ENCODE measurements at regions of chr21 and their contacts with region 1.

Region 1: DNA sequence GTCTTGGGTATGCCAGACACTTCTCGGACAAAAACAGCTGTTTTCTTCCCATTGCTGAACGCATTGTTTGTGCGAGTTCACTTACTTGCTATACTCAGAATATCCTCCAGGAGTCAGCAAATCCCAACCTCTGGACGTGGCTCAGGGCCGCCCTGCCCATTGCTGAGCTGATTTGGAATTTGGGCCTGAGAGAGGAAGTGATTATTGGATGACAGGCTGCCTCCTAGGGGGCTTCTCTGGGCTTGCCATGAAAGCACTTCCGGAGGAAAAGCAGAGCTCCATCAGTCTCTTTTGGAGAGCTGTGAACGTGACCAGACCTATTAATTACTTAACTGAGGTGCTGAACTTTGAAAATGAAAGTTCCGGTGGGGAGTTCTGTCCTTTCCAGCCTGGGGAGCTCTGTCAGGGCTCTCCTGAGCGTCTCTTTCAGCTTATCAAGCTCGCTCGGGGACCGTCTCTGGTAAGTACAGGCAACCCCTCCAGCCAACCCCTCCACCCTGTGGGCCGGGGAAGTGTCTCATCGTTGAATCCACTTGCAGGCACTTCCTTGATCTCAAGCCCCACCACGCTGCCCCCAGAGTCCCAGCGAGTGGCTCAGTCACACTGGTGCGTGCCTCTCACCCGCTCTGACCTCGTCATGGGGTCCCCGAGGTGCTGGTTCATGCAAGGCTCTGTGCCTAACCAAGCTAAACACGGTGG is 76.9 kb downstream of the CLIC6 start:
- DNase-seq: peak; percentile 90
- ATAC-seq: peak; percentile 97
- H3K4me3 ChIP-seq: peak overlapping the region; percentile 49 to 72 (median 58)
- H3K27ac ChIP-seq: peak overlapping the region; percentile 43
- H3K4me1 ChIP-seq: peaks cover 44% of the 10 kb centered on the region
- H3K27me3 ChIP-seq: 0 out of 5 replicates have a peak, but pooled peaks cover 0 to 8% of the 10 kb centered on the region in 2 experiments
- CTCF ChIP-seq: peak; percentile 93
- EP300 ChIP-seq: no peak
- POLR2A ChIP-seq: no peak
- RAD21 ChIP-seq: peak; percentile 96

Region 2: GRCh38 chr21:34771512-34772028 is 25.9 kb after region 1 on chr21:
- CTCF ChIA-PET with region 1: no interaction called
- POLR2A ChIA-PET with region 1: interaction called, 5 read pairs
- in situ Hi-C with region 1: no loop called
- intact Hi-C with region 1: loop called (anchors 1 kb)
- DNase-seq: peak; percentile 89
- ATAC-seq: peak; percentile 99
- H3K4me3 ChIP-seq: peak overlapping the region in 2 of 3 experiments; percentile 17 to 50; a peak in 2 of 6 replicates
- H3K27ac ChIP-seq: peak overlapping the region; percentile 81
- H3K4me1 ChIP-seq: peaks cover 44% of the 10 kb centered on the region
- H3K27me3 ChIP-seq: no peaks in the 10 kb centered on the region
- CTCF ChIP-seq: no peak
- EP300 ChIP-seq: peak in 1 of 2 experiments; percentile 75; a peak in 2 of 4 replicates
- POLR2A ChIP-seq: peak in 1 of 2 experiments; percentile 52; a peak in 2 of 4 replicates
- RAD21 ChIP-seq: no peak

Region 3: DNA sequence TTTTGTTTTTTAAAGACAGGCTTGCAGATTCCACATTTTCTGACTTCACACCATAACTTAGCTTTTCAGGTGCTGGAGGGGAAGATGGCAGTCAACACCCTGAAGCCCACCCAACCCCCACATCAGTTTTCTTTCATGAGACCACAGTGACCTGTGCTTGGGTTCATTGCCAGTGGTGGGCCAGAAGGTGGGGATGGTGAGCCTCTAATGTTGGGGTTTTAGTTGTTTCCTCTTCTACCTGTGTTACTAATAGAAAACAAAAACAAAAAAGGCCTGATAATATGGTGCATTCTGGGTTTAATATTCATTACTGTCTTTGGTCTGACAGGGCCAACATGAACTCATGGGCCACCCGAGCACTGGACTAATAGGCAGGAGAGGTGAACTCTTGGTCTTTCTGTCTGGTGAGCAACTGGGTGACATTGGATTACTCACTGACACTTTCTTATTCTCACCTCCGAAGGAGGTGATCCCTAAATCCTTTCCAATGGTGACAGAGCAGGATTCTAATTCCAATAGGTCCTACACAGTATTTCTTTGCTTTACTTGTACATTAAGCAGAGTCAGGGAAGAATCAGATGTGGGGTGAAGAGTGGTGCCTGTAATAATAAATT is 55.9 kb after region 1 on chr21:
- CTCF ChIA-PET with region 1: no interaction called
- POLR2A ChIA-PET with region 1: interaction called, 29 read pairs
- in situ Hi-C with region 1: no loop called
- intact Hi-C with region 1: loop called (anchors 5 kb)
- DNase-seq: no peak
- ATAC-seq: peak; percentile 71
- H3K4me3 ChIP-seq: no peak overlapping the region
- H3K27ac ChIP-seq: peak overlapping the region; percentile 41
- H3K4me1 ChIP-seq: peaks cover 58% of the 10 kb centered on the region
- H3K27me3 ChIP-seq: no peaks in the 10 kb centered on the region
- CTCF ChIP-seq: peak; percentile 71
- EP300 ChIP-seq: no peak
- POLR2A ChIP-seq: no peak
- RAD21 ChIP-seq: no peak; the same call in 1 of the 2 replicates

Region 4: DNA sequence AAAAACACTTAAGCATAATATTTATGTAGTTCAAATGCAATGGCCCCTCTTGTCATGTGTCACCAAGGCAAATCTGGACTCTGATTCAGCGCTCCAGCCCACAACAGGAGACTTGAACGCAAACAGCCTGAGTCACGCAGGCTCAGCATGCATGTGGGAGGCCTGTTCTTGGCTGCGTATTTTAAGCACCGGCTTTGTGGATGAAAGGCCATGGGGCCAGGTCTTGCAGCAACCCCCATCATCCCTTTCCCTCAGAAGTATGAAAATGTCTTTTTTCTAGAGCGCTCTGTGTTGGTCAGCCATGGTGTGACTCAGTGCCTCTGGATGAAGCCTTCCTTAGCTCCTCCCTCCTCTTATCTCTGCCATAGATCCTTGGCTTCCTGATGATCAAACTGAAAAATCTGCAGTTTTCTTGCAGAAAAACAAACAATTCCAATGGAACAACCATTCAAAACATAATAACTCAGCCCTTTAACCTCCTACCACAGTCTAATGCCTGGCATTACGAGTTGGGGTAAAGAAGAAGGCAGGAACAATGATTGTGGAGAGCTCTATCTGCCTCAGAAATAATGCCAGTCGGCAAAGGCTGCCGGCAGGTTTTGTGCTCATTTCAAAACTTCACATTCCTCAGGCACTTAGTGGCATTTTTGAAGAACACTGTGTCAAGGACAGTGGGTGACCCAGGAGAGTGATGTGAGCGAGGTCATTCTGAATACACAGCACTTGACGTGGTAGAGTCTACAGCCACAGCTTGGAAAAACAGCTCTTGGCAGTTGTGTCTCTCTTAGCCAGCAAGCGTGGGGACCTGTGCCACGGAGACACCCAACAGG is 90.6 kb after region 1 on chr21:
- CTCF ChIA-PET with region 1: no interaction called
- POLR2A ChIA-PET with region 1: interaction called, 16 read pairs
- in situ Hi-C with region 1: no loop called
- intact Hi-C with region 1: loop called (anchors 5 kb)
- DNase-seq: peak; percentile 92
- ATAC-seq: peak; percentile 92
- H3K4me3 ChIP-seq: peak overlapping the region; percentile 19 to 45 (median 21)
- H3K27ac ChIP-seq: peak overlapping the region; percentile 92
- H3K4me1 ChIP-seq: peaks cover 54% of the 10 kb centered on the region
- H3K27me3 ChIP-seq: no peaks in the 10 kb centered on the region
- CTCF ChIP-seq: no peak
- EP300 ChIP-seq: peak; percentile 48 to 87; a peak in 2 of 4 replicates
- POLR2A ChIP-seq: peak in 1 of 2 experiments; percentile 37; a peak in 1 of 4 replicates
- RAD21 ChIP-seq: 0 out of 2 replicates have a peak, but pooled peaks have one; percentile 6

Region 5: DNA sequence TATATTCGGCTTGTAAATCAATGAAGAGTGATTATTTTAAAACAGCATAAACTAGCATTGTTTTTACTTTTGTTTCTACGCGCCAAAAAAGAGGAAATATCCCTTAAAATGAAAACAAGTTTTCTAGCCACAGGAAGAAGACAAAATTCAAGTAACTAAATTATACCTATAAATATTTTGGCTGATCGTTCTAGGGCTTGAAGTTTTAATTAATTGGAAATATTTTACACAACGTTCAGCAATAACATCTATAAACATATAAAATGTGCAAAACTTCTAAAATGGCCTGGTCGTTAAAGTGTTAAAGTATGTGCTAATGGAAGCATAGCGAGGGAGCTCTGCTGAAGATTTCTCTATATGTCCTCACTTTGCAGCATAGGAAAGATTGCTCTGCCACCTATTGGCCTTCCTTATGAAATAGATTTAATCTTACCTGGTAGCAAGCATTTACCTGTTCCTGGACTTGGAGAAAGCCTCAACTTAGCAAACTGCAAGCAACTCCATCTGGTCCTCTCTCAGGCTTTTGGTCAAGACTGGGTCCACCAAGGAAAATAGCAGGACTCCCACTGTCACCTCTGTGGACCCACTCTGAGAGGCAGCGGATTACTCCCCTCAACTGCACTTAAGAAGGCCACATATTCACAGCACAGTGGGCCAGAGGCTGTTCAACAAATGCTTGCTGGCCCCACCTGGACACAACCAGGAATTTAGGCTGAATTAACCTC is 654.7 kb after region 1 on chr21:
- CTCF ChIA-PET with region 1: interaction called, 11 read pairs
- POLR2A ChIA-PET with region 1: no interaction called
- in situ Hi-C with region 1: loop called (anchors 25 kb)
- intact Hi-C with region 1: loop called (anchors 1 kb)
- DNase-seq: peak; percentile 67
- ATAC-seq: peak; percentile 87
- H3K4me3 ChIP-seq: no peak overlapping the region
- H3K27ac ChIP-seq: no peak overlapping the region
- H3K4me1 ChIP-seq: no peaks in the 10 kb centered on the region
- H3K27me3 ChIP-seq: peaks cover 0 to 11% of the 10 kb centered on the region in 2 experiments; a peak in 3 of 5 replicates
- CTCF ChIP-seq: peak; percentile 69
- EP300 ChIP-seq: no peak
- POLR2A ChIP-seq: no peak
- RAD21 ChIP-seq: peak; percentile 62

Measured in HepG2 (cell line).